ENCODE measurements at regions of chr3 and their contacts with region 1.

Region 1: DNA sequence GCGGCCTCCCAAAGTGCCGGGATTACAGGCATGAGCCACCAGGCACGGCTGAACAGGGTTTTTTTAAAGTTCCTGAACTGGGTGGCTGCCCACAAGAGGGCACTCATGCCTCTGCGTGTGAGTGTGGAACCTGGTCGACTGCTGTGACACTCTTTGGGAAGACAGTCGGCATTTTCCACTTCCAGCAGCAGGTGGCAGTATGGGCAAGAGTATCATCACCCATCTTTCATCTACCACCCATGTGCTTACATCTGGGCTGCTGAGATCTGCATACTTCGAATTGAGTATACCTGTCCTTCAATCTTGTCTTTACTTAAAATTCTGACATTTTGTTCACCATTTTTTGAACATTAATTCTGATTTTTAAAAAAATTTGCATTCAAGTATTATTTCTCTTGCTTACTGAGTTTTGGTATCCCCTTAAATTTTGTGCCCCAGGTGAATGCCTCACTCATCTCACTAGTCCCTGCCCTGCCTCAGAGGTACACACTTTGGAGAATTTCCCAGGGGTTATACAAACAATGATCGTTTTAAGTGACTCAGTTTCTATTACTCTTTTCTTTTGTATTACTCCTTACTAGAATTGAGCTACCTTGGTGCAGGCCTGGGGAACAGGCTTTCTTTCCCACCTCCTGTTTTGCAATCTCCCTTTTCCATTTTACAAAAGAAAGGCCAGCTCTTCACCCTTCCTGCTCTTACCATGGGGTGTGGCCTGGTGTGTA is 11.8 kb downstream of the CLEC3B start:
- DNase-seq: peak; percentile 98
- ATAC-seq: peak; percentile 77
- H3K4me3 ChIP-seq: peak overlapping the region; percentile 40; the same call in 1 of the 2 replicates
- H3K27ac ChIP-seq: no peak overlapping the region
- H3K4me1 ChIP-seq: peaks cover 29% of the 10 kb centered on the region
- H3K27me3 ChIP-seq: no peaks in the 10 kb centered on the region
- CTCF ChIP-seq: peak; percentile 97

Region 2: DNA sequence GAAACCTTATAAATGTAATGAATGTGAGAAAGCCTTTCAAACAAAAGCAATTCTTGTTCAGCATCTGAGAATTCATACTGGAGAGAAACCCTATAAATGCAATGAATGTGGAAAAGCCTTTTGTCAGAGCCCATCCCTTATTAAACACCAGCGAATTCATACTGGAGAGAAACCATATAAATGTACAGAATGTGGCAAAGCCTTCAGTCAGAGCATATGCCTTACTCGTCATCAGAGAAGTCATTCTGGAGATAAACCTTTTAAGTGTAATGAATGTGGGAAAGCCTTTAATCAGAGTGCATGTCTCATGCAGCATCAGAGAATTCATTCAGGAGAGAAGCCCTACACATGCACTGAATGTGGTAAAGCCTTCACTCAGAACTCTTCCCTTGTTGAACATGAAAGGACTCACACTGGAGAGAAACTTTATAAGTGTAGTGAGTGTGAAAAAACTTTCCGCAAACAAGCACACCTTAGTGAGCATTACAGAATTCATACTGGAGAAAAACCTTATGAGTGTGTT is 303.2 kb before region 1 on chr3:
- CTCF ChIA-PET with region 1: no interaction called
- POLR2A ChIA-PET with region 1: no interaction called
- intact Hi-C with region 1: no loop called
- DNase-seq: no peak
- ATAC-seq: no peak
- H3K4me3 ChIP-seq: no peak overlapping the region
- H3K27ac ChIP-seq: no peak overlapping the region
- H3K4me1 ChIP-seq: no peaks in the 10 kb centered on the region
- H3K27me3 ChIP-seq: no peaks in the 10 kb centered on the region
- CTCF ChIP-seq: no peak

Region 3: GRCh38 chr3:44988073-44988472 is 49.8 kb before region 1 on chr3:
- CTCF ChIA-PET with region 1: no interaction called
- POLR2A ChIA-PET with region 1: no interaction called
- intact Hi-C with region 1: no loop called
- DNase-seq: peak; percentile 50
- ATAC-seq: peak; percentile 37
- H3K4me3 ChIP-seq: no peak overlapping the region
- H3K27ac ChIP-seq: no peak overlapping the region
- H3K4me1 ChIP-seq: peaks cover 32% of the 10 kb centered on the region
- H3K27me3 ChIP-seq: no peaks in the 10 kb centered on the region
- CTCF ChIP-seq: peak; percentile 80

Region 4: GRCh38 chr3:45210308-45211041 is 172.6 kb after region 1 on chr3:
- CTCF ChIA-PET with region 1: interaction called, 39 read pairs
- POLR2A ChIA-PET with region 1: no interaction called
- intact Hi-C with region 1: loop called (anchors 1 kb)
- DNase-seq: peak; percentile 92
- ATAC-seq: peak; percentile 98
- H3K4me3 ChIP-seq: no peak overlapping the region
- H3K27ac ChIP-seq: no peak overlapping the region
- H3K4me1 ChIP-seq: peaks cover 13% of the 10 kb centered on the region
- H3K27me3 ChIP-seq: no peaks in the 10 kb centered on the region
- CTCF ChIP-seq: peak; percentile 92

Region 5: DNA sequence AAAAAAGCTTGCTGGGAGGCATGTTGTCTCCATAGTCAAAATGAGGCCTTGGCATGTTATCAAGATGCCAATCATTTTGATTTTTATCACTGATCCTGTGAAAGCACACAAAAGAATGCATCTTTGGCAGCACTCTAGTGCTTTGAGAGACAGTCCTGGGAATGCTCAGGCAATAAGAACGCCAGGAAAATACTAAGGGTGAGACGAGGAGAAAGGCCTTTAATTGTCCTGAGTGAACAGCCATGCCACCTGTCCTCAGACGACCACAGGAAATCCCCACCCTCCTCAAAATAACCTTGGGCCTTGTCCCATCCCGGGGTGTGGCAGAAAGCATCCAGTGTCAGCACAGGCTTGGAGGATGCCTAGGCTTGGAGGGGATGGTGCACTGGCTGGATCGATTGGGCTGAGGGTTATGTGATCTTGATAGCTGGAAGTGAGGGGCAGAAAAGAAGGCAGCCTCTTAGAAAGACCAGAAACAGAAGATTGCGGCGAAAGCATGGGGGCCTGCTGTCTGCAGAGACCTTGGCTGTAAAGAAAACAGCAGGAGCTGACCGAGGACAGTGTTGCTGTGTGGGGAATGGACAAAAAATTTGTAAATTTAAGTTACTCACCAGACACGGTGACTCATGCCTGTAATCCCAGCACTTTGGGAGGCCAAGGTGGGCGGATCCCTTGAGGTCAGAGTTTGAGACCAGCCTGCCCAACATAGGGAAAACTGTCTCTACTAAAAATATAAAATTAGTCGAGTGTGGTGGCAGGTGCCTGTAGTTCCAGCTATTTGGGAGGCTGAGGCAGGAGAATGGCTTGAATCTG is 180.9 kb after region 1 on chr3:
- CTCF ChIA-PET with region 1: interaction called, 12 read pairs
- POLR2A ChIA-PET with region 1: no interaction called
- intact Hi-C with region 1: no loop called
- DNase-seq: peak; percentile 86
- ATAC-seq: peak; percentile 77
- H3K4me3 ChIP-seq: peak overlapping the region; percentile 27
- H3K27ac ChIP-seq: peak overlapping the region; percentile 75
- H3K4me1 ChIP-seq: peaks cover 33% of the 10 kb centered on the region
- H3K27me3 ChIP-seq: no peaks in the 10 kb centered on the region
- CTCF ChIP-seq: no peak

Region 6: DNA sequence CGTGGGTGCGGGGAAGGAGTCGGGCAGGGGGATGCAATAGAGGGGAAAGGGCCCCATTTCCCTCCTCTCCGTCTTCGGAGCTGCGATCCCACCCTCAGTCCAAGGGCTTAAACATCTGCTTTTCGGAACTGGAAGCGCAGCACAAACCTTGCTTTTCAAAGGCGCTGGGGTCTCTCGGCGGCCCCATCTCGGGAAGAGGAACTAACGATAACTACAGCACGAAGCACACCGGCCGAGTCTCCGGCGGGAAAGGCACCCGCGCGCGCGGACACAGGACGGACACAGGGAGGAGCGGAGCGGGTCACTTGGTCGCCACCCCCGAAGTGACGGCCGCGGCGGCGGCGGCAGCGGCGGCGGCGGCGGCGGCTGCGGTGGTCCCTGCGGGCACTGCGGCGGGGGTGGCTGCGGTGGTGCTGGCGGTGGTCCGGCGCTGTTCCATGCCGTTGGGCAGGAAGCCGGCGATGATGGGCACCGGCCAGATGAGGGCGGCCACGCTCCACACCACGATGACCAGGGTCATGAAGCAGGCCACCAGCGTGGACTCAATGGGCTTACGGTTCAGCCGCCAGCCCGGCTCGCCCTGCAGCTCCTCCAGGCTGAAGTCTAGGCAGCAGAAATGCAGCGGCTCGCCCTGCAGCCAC is 187.0 kb after region 1 on chr3:
- CTCF ChIA-PET with region 1: interaction called, 12 read pairs
- POLR2A ChIA-PET with region 1: no interaction called
- intact Hi-C with region 1: loop called (anchors 1 kb)
- DNase-seq: peak; percentile 73
- ATAC-seq: peak; percentile 61
- H3K4me3 ChIP-seq: peak overlapping the region; percentile 76
- H3K27ac ChIP-seq: peak overlapping the region; percentile 64
- H3K4me1 ChIP-seq: peaks cover 15% of the 10 kb centered on the region
- H3K27me3 ChIP-seq: no peaks in the 10 kb centered on the region
- CTCF ChIP-seq: peak; percentile 58

Region 7: DNA sequence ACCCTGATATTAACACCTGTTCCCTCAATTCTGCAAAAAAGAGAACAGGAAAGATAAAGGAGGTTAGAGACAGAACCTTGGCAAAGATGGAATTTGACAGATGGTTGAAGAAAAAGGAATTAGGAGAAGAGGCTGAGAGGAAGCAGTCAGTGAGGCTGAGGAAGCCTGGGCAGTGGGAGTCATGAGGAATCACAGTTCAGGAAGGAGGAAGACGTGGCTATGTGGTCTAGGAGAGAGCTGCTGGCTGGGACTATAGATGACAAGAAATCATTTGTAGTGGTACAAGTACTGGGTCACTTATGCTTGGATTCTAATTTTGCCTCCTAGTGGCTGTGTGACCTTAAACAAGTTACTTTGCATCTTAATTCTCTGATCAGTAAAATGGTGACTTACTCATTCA is 399.5 kb after region 1 on chr3:
- CTCF ChIA-PET with region 1: no interaction called
- POLR2A ChIA-PET with region 1: no interaction called
- intact Hi-C with region 1: loop called (anchors 1 kb)
- DNase-seq: peak; percentile 9
- ATAC-seq: peak; percentile 71
- H3K4me3 ChIP-seq: no peak overlapping the region
- H3K27ac ChIP-seq: no peak overlapping the region
- H3K4me1 ChIP-seq: no peaks in the 10 kb centered on the region
- H3K27me3 ChIP-seq: no peaks in the 10 kb centered on the region
- CTCF ChIP-seq: peak; percentile 47; the same call in 1 of the 2 replicates